B cell (primary cell): ENCODE measurements at regions of chr1 and their contacts with region 1.

Region 1: GRCh38 chr1:160046494-160047110 is 14.8 kb upstream of the PIGM start:
- DNase-seq: peak; percentile 73
- ATAC-seq: peak; percentile 86
- H3K4me3 ChIP-seq: peak overlapping the region in 4 of 5 experiments; percentile 26 to 57 (median 53)
- H3K4me3 Mint-ChIP-seq: peak overlapping the region; percentile 91
- H3K27ac ChIP-seq: no peak overlapping the region
- H3K27ac Mint-ChIP-seq: peak overlapping the region; percentile 17
- H3K4me1 ChIP-seq: peaks cover 11 to 12% of the 10 kb centered on the region in 2 donors
- H3K4me1 Mint-ChIP-seq: peaks cover 12% of the 10 kb centered on the region
- H3K27me3 ChIP-seq: peaks cover 0 to 10% (median 7%) of the 10 kb centered on the region in 4 experiments
- H3K27me3 Mint-ChIP-seq: peaks cover 25% of the 10 kb centered on the region
- CTCF ChIP-seq: peak; percentile 82

Region 2: DNA sequence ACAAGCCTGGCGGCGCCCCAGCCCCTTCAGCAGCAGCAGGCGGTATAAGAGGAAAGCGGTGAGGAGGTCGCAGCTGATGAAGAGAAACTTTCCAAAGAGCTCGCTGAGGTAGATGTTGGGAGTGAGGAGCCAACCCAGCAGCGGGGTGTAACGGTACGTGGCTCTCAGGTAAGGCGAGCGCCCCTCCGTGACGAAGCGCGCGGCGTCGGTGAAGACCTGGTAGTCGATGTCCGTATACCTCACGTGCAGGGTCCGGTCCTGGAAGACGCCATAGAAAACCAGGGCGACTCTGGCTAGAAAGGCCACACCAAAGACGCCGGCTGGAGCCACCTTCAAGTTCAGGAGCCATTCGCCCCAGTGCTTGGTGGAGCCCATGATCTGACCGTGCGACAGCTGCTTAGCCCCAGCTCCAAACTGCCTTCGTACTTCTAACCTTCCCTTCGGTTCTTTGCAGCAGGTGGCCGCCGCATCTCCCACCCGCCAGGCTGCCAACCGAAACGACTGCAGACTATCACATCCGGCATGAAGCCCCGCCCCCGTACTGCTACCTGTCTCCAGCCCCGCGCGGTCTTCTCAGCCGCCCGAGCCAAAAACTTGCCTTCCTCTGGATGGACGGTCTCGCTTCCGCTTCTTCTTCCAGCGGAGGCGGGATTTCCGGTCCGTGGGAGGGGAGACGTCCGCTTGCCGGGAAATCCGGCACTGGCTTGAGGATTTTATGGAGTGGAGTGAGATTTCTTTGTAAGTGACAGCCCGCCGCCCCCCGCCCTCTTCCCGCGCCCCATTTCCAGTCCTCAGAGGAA is 15.0 kb before region 1 on chr1 and contains the start of gene PIGM:
- CTCF ChIA-PET with region 1: interaction called, 26 read pairs
- POLR2A ChIA-PET with region 1: no interaction called
- intact Hi-C with region 1: loop called (anchors 2 kb)
- DNase-seq: peak; percentile 90
- ATAC-seq: peak; percentile 96
- H3K4me3 ChIP-seq: peak within 1 kb of the TSS; percentile 51 to 78 (median 74)
- H3K4me3 Mint-ChIP-seq: peak within 1 kb of the TSS; percentile 99
- H3K27ac ChIP-seq: peak within 1 kb of the TSS in 1 of 2 donors; percentile 57
- H3K27ac Mint-ChIP-seq: peak within 1 kb of the TSS; percentile 88
- H3K4me1 ChIP-seq: peaks cover 19 to 20% of the 10 kb centered on the region in 2 donors
- H3K4me1 Mint-ChIP-seq: peaks cover 27% of the 10 kb centered on the region
- H3K27me3 ChIP-seq: no peaks in the 10 kb centered on the region
- H3K27me3 Mint-ChIP-seq: no peaks in the 10 kb centered on the region
- CTCF ChIP-seq: no peak
- total RNA-seq, gene PIGM: 6.0 and 7.4 TPM in 2 replicates

Region 3: DNA sequence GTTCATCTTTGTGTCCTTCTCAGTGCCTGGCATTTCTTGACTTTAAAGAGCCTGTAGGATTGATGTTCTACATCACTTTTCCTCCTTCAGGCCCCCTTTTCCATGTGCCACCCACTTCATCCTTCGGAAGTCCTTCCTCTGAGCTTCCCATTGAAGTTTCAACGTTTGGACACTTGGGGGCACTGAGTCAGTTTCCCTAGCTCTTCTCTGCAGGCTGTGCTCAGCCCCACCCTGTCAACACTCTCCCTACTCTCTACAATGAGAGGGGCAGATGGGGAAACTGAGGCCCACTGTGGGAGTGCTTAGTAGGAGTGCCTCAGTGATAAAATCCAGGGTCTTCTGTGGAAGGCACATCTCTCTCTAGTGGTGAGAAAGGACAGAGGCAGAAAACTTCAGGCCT is 11.5 kb after region 1 on chr1:
- CTCF ChIA-PET with region 1: interaction called, 12 read pairs
- POLR2A ChIA-PET with region 1: no interaction called
- intact Hi-C with region 1: no loop called
- DNase-seq: no peak
- ATAC-seq: no peak
- H3K4me3 ChIP-seq: no peak overlapping the region
- H3K4me3 Mint-ChIP-seq: no peak overlapping the region
- H3K27ac ChIP-seq: no peak overlapping the region
- H3K27ac Mint-ChIP-seq: no peak overlapping the region
- H3K4me1 ChIP-seq: no peaks in the 10 kb centered on the region
- H3K4me1 Mint-ChIP-seq: no peaks in the 10 kb centered on the region
- H3K27me3 ChIP-seq: peaks cover 0 to 58% (median 12%) of the 10 kb centered on the region in 4 experiments
- H3K27me3 Mint-ChIP-seq: peaks cover 57% of the 10 kb centered on the region
- CTCF ChIP-seq: no peak

Region 4: GRCh38 chr1:160070243-160071163 is 23.9 kb after region 1 on chr1:
- CTCF ChIA-PET with region 1: interaction called, 4 read pairs
- POLR2A ChIA-PET with region 1: no interaction called
- intact Hi-C with region 1: loop called (anchors 2 kb)
- DNase-seq: peak; percentile 81
- ATAC-seq: peak; percentile 98
- H3K4me3 ChIP-seq: peak overlapping the region in 4 of 5 experiments; percentile 48 to 63 (median 60)
- H3K4me3 Mint-ChIP-seq: peak overlapping the region; percentile 90
- H3K27ac ChIP-seq: no peak overlapping the region
- H3K27ac Mint-ChIP-seq: no peak overlapping the region
- H3K4me1 ChIP-seq: peaks cover 11 to 12% of the 10 kb centered on the region in 2 donors
- H3K4me1 Mint-ChIP-seq: peaks cover 12% of the 10 kb centered on the region
- H3K27me3 ChIP-seq: peaks cover 0 to 32% (median 19%) of the 10 kb centered on the region in 4 experiments
- H3K27me3 Mint-ChIP-seq: peaks cover 56% of the 10 kb centered on the region
- CTCF ChIP-seq: no peak

Region 5: DNA sequence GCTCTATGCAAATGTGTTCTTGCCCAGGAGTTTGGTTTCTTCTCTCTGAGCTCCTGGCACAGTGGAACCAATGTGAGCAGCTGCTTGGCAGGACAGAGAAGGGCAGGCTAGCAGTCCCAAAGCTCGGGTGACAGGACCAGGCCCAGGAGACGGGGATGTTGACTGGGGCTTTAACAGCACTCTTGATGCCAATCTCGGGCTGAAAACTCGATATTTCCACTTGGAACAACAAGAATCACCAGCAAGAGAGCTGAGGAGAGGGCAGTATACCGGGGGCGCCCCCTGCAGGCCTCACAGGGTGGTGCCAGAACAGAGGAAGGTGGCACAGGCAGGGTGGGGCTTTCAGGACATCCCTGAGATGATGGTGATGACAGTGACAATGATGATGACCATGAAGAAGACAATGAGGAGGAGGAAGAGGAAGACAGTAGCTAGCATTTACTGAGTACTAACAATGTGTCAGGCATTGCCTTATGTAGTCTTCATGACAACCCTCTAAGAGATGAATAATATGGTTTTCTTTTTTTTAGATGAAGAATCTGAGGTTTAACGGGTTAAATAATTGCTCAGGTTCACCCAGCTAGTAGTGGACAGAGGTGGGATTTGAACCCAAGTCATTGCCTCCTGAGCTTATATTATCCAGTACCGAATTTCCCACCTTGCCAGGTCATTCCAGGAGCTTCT is 32.1 kb after region 1 on chr1:
- CTCF ChIA-PET with region 1: interaction called, 112 read pairs
- POLR2A ChIA-PET with region 1: no interaction called
- intact Hi-C with region 1: no loop called
- DNase-seq: peak; percentile 66
- ATAC-seq: peak; percentile 70
- H3K4me3 ChIP-seq: no peak overlapping the region
- H3K4me3 Mint-ChIP-seq: no peak overlapping the region
- H3K27ac ChIP-seq: no peak overlapping the region
- H3K27ac Mint-ChIP-seq: no peak overlapping the region
- H3K4me1 ChIP-seq: peaks cover 0 to 4% of the 10 kb centered on the region in 2 donors
- H3K4me1 Mint-ChIP-seq: peaks cover 2% of the 10 kb centered on the region
- H3K27me3 ChIP-seq: peaks cover 0 to 51% (median 35%) of the 10 kb centered on the region in 4 experiments
- H3K27me3 Mint-ChIP-seq: peaks cover 54% of the 10 kb centered on the region
- CTCF ChIP-seq: peak; percentile 83

Region 6: GRCh38 chr1:160085686-160086455 is 39.3 kb after region 1 on chr1:
- CTCF ChIA-PET with region 1: interaction called, 112 read pairs
- POLR2A ChIA-PET with region 1: no interaction called
- intact Hi-C with region 1: loop called (anchors 1 kb)
- DNase-seq: peak; percentile 79
- ATAC-seq: peak; percentile 58
- H3K4me3 ChIP-seq: no peak overlapping the region
- H3K4me3 Mint-ChIP-seq: peak overlapping the region; percentile 26
- H3K27ac ChIP-seq: no peak overlapping the region
- H3K27ac Mint-ChIP-seq: peak overlapping the region; percentile 21
- H3K4me1 ChIP-seq: peaks cover 6 to 9% of the 10 kb centered on the region in 2 donors
- H3K4me1 Mint-ChIP-seq: peaks cover 12% of the 10 kb centered on the region
- H3K27me3 ChIP-seq: peaks cover 0 to 25% (median 18%) of the 10 kb centered on the region in 4 experiments
- H3K27me3 Mint-ChIP-seq: peaks cover 20% of the 10 kb centered on the region
- CTCF ChIP-seq: peak; percentile 85

Region 7: DNA sequence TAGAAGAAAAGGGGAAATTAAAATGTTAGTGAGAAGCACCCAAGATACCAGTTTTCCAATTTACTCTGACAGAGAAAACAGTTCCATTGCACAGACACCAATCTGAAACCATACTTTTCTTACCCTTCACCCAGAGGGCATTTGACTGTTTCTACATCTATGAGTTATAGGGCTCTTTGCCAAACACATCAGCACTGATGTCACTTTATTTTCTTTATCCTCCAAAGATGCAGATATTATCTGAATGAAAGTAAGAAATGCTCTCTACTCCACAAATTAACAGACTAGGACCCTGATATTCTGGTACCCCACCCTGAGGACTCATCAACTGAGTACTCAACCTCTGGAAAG is 262.6 kb after region 1 on chr1:
- CTCF ChIA-PET with region 1: no interaction called
- POLR2A ChIA-PET with region 1: no interaction called
- intact Hi-C with region 1: no loop called
- DNase-seq: no peak
- ATAC-seq: no peak
- H3K4me3 ChIP-seq: no peak overlapping the region
- H3K4me3 Mint-ChIP-seq: no peak overlapping the region
- H3K27ac ChIP-seq: peak overlapping the region in 1 of 2 donors; percentile 40
- H3K27ac Mint-ChIP-seq: peak overlapping the region; percentile 43
- H3K4me1 ChIP-seq: peaks cover 7 to 22% of the 10 kb centered on the region in 2 donors
- H3K4me1 Mint-ChIP-seq: peaks cover 35% of the 10 kb centered on the region
- H3K27me3 ChIP-seq: no peaks in the 10 kb centered on the region
- H3K27me3 Mint-ChIP-seq: no peaks in the 10 kb centered on the region
- CTCF ChIP-seq: no peak